ENCODE measurements at regions of chr17 and their contacts with region 1.

Region 1: GRCh38 chr17:27455914-27456680 is at the start of gene KSR1:
- DNase-seq: no peak
- ATAC-seq: peak; percentile 89
- H3K4me3 ChIP-seq: peak within 1 kb of the TSS; percentile 89
- H3K27ac ChIP-seq: peak within 1 kb of the TSS; percentile 38
- H3K4me1 ChIP-seq: peaks cover 16% of the 10 kb centered on the region
- H3K27me3 ChIP-seq: no peaks in the 10 kb centered on the region
- CTCF ChIP-seq: peak; percentile 38 to 56 (median 42); a peak in 5 of 6 replicates
- EP300 ChIP-seq: no peak
- POLR2A ChIP-seq: peak; percentile 75
- RAD21 ChIP-seq: peak; percentile 44
- polyA plus RNA-seq, gene KSR1: 0.97 to 1.7 TPM

Region 2: DNA sequence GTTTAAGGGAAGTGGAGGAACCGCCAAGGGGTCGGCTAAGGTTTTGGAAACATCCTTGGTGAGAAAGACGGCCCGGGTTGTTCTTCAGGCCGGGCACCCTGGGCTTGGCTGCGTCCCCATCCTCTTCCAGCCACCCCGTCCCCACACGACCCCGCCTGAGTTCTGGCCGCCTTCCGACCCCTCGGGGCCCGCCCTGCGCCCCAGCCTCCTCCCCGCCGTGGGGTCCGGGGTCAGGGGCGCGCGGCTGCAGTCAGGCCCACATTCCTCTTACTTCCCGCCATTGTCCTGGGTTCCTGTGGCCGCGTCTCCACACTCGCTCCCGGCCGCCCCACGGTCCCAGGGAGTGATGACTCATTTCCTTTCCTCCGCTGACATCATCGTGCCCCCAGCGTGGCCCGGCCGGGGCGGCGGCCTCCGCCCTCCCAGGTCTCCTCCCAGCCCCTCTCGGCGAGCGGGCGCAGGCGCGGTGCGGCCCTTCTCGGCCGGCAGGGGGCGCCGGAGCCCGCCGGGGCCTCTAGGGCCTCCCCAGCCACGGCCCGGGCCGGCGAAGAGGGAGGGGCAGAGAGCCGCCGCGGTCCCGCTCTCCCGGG is 102.5 kb before region 1 on chr17:
- CTCF ChIA-PET with region 1: interaction called, 8 read pairs
- POLR2A ChIA-PET with region 1: interaction called, 3 read pairs
- RAD21 ChIA-PET with region 1: interaction called, 4 read pairs
- SMC1A ChIA-PET with region 1: interaction called, 3 read pairs
- in situ Hi-C with region 1: loop called (anchors 5 kb)
- intact Hi-C with region 1: loop called (anchors 5 kb)
- DNase-seq: peak; percentile 42
- ATAC-seq: peak; percentile 94
- H3K4me3 ChIP-seq: peak overlapping the region; percentile 73
- H3K27ac ChIP-seq: peak overlapping the region; percentile 70
- H3K4me1 ChIP-seq: peaks cover 7% of the 10 kb centered on the region
- H3K27me3 ChIP-seq: no peaks in the 10 kb centered on the region
- CTCF ChIP-seq: peak; percentile 63 to 93 (median 89); a peak in 4 of 6 replicates
- EP300 ChIP-seq: peak in 1 of 2 experiments; percentile 39; a peak in 2 of 4 replicates
- POLR2A ChIP-seq: peak; percentile 85
- RAD21 ChIP-seq: peak; percentile 73

Region 3: GRCh38 chr17:27370776-27371175 is 85.3 kb before region 1 on chr17:
- CTCF ChIA-PET with region 1: no interaction called
- POLR2A ChIA-PET with region 1: no interaction called
- RAD21 ChIA-PET with region 1: no interaction called
- SMC1A ChIA-PET with region 1: no interaction called
- in situ Hi-C with region 1: no loop called
- intact Hi-C with region 1: no loop called
- DNase-seq: no peak
- ATAC-seq: no peak
- H3K4me3 ChIP-seq: no peak overlapping the region
- H3K27ac ChIP-seq: no peak overlapping the region
- H3K4me1 ChIP-seq: no peaks in the 10 kb centered on the region
- H3K27me3 ChIP-seq: no peaks in the 10 kb centered on the region
- CTCF ChIP-seq: no peak
- EP300 ChIP-seq: no peak
- POLR2A ChIP-seq: no peak
- RAD21 ChIP-seq: no peak

Region 4: GRCh38 chr17:27396045-27396444 is 60.1 kb before region 1 on chr17:
- CTCF ChIA-PET with region 1: no interaction called
- POLR2A ChIA-PET with region 1: no interaction called
- RAD21 ChIA-PET with region 1: no interaction called
- SMC1A ChIA-PET with region 1: no interaction called
- in situ Hi-C with region 1: no loop called
- intact Hi-C with region 1: no loop called
- DNase-seq: no peak
- ATAC-seq: no peak
- H3K4me3 ChIP-seq: no peak overlapping the region
- H3K27ac ChIP-seq: no peak overlapping the region
- H3K4me1 ChIP-seq: no peaks in the 10 kb centered on the region
- H3K27me3 ChIP-seq: no peaks in the 10 kb centered on the region; a peak in 1 of 4 replicates
- CTCF ChIP-seq: no peak
- EP300 ChIP-seq: no peak
- POLR2A ChIP-seq: no peak
- RAD21 ChIP-seq: no peak

Region 5: GRCh38 chr17:27423651-27424050 is 32.4 kb before region 1 on chr17:
- CTCF ChIA-PET with region 1: no interaction called
- POLR2A ChIA-PET with region 1: no interaction called
- RAD21 ChIA-PET with region 1: no interaction called
- SMC1A ChIA-PET with region 1: no interaction called
- in situ Hi-C with region 1: no loop called
- intact Hi-C with region 1: no loop called
- DNase-seq: no peak
- ATAC-seq: no peak
- H3K4me3 ChIP-seq: no peak overlapping the region
- H3K27ac ChIP-seq: no peak overlapping the region
- H3K4me1 ChIP-seq: peaks cover 3% of the 10 kb centered on the region; the same call in 1 of the 2 replicates
- H3K27me3 ChIP-seq: no peaks in the 10 kb centered on the region; a peak in 1 of 4 replicates
- CTCF ChIP-seq: no peak
- EP300 ChIP-seq: no peak
- POLR2A ChIP-seq: no peak
- RAD21 ChIP-seq: no peak

Region 6: DNA sequence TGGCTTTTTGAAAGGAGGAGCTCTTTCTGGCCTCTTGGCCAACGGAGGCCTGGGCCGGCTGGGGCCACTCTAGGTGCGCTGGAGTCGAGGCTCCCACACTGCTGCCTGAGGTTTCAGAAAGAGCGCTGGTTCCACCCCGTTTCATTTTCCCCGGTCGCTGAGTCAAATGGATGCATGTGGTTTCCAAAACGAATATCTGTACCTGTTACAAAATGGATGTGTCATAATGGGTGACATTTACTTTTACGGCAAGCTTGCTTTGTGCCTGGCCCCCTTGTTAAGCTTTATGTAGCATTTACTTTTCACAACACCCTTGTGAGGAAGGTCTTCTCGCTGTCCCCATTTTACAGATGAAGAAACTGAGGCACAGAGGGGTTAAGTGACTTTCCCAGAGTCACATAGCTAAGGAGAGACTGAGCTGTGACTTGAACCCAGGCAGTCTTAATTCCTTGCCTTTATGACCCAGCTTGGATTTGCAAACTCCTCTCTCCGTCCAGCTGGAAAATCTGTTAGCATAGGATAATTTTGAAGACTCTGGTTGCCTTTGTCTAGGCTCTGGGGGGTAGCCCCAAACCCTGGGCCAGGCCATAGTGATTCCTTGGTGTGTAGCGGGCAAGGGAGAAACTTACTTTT is 10.8 kb after region 1 on chr17:
- CTCF ChIA-PET with region 1: interaction called, 69 read pairs
- POLR2A ChIA-PET with region 1: interaction called, 143 read pairs
- RAD21 ChIA-PET with region 1: interaction called, 229 read pairs
- SMC1A ChIA-PET with region 1: interaction called, 228 read pairs
- in situ Hi-C with region 1: no loop called
- intact Hi-C with region 1: loop called (anchors 2 kb)
- DNase-seq: peak; percentile 87
- ATAC-seq: peak; percentile 79
- H3K4me3 ChIP-seq: peak overlapping the region; percentile 54
- H3K27ac ChIP-seq: peak overlapping the region; percentile 92
- H3K4me1 ChIP-seq: peaks cover 67% of the 10 kb centered on the region
- H3K27me3 ChIP-seq: no peaks in the 10 kb centered on the region
- CTCF ChIP-seq: 0 out of 6 replicates have a peak, but pooled peaks of 1 of the 3 experiments have one; percentile 4
- EP300 ChIP-seq: peak; percentile 26 to 90; a peak in 3 of 4 replicates
- POLR2A ChIP-seq: peak; percentile 47; the same call in 1 of the 2 replicates
- RAD21 ChIP-seq: no peak; the same call in 1 of the 2 replicates

Region 7: DNA sequence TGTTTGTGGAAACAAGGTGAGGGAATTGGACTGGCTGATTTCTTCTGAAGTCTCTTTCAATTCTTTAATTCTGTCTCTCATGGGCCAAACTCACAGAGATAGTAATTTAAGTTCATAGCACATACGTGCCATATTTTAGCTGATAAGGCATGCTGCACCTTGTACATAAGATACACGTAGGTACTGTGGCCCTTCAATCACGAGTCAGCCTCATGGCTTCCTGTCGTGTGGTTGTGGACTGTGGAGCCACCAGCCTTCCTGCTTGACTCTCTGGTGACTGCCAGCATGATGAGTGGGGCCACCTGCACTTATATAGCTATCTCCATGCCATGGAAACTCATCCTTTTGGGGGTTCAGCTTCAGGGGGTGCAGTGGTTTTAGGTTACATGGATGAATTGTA is 25.2 kb after region 1 on chr17:
- CTCF ChIA-PET with region 1: interaction called, 69 read pairs
- POLR2A ChIA-PET with region 1: interaction called, 11 read pairs
- RAD21 ChIA-PET with region 1: interaction called, 229 read pairs
- SMC1A ChIA-PET with region 1: interaction called, 228 read pairs
- in situ Hi-C with region 1: no loop called
- intact Hi-C with region 1: no loop called
- DNase-seq: no peak
- ATAC-seq: peak; percentile 64
- H3K4me3 ChIP-seq: no peak overlapping the region
- H3K27ac ChIP-seq: peak overlapping the region; percentile 43
- H3K4me1 ChIP-seq: peaks cover 39% of the 10 kb centered on the region
- H3K27me3 ChIP-seq: no peaks in the 10 kb centered on the region
- CTCF ChIP-seq: no peak
- EP300 ChIP-seq: peak in 1 of 2 experiments; percentile 28; a peak in 1 of 4 replicates
- POLR2A ChIP-seq: peak; percentile 43; the same call in 1 of the 2 replicates
- RAD21 ChIP-seq: no peak

Region 8: DNA sequence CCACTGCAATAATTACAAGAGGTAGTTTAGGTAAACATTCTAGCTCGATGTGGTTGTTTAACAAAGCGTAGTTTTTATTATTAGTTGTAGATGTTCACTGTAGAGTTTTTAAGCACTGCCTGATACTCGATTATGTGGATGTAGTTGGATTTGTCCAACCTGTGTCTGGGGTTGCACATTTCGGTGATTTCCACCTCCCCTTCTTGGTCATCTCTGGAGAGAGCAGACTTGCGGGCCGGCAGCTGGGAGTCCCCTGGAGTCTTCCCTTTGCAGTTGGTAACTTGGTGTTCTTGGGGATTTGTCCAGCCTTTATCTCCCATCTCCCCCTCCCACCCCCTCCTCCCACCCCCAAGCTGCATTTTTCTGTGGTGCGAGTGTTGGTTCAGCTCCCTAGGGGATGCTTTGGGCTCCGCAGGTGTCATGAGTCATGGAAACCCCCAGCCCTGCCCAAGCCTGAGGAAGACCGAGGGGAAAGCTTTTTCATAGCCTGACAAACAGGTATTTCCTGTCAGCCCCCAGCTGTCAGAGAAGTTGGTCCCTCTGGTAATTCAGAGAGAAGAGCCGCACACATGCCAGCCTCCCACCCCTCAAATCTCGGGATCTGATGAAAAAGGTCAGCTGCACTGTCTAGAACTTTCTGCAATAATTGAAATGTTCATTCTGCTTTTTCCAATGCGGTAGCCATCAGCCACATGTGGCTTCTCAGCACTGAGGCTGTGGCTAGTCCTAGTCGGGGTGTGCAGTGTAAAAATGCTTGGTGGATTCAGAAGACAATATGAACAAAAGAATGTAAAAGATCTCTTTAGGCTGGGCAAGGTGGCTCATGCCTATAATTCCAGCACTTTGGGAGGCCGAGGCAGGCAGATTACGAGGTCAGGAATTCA is 50.5 kb after region 1 on chr17:
- CTCF ChIA-PET with region 1: interaction called, 4 read pairs
- POLR2A ChIA-PET with region 1: interaction called, 18 read pairs
- RAD21 ChIA-PET with region 1: interaction called, 37 read pairs
- SMC1A ChIA-PET with region 1: interaction called, 28 read pairs
- in situ Hi-C with region 1: no loop called
- intact Hi-C with region 1: loop called (anchors 5 kb)
- DNase-seq: peak; percentile 70
- ATAC-seq: peak; percentile 82
- H3K4me3 ChIP-seq: peak overlapping the region; percentile 61; the same call in 1 of the 2 replicates
- H3K27ac ChIP-seq: peak overlapping the region; percentile 79
- H3K4me1 ChIP-seq: peaks cover 30% of the 10 kb centered on the region
- H3K27me3 ChIP-seq: no peaks in the 10 kb centered on the region
- CTCF ChIP-seq: no peak
- EP300 ChIP-seq: peak; percentile 67 to 69; a peak in 3 of 4 replicates
- POLR2A ChIP-seq: 0 out of 2 replicates have a peak, but pooled peaks have one; percentile 24
- RAD21 ChIP-seq: 0 out of 2 replicates have a peak, but pooled peaks have one; percentile 13

Region 9: GRCh38 chr17:27526604-27527230 is 70.6 kb after region 1 on chr17:
- CTCF ChIA-PET with region 1: interaction called, 6 read pairs
- POLR2A ChIA-PET with region 1: interaction called, 6 read pairs
- RAD21 ChIA-PET with region 1: interaction called, 4 read pairs
- SMC1A ChIA-PET with region 1: interaction called, 19 read pairs
- in situ Hi-C with region 1: no loop called
- intact Hi-C with region 1: no loop called
- DNase-seq: no peak
- ATAC-seq: peak; percentile 84
- H3K4me3 ChIP-seq: no peak overlapping the region
- H3K27ac ChIP-seq: no peak overlapping the region
- H3K4me1 ChIP-seq: peaks cover 18% of the 10 kb centered on the region
- H3K27me3 ChIP-seq: no peaks in the 10 kb centered on the region
- CTCF ChIP-seq: no peak
- EP300 ChIP-seq: no peak
- POLR2A ChIP-seq: no peak
- RAD21 ChIP-seq: no peak